ENCODE measurements at regions of chr7 and their contacts with region 1.

Region 1: GRCh38 chr7:23273141-23273599 is 26.0 kb upstream of the MALSU1 start:
- DNase-seq: peak; percentile 94
- H3K4me3 Mint-ChIP-seq: peak overlapping the region; percentile 46
- H3K27ac Mint-ChIP-seq: no peak overlapping the region
- H3K4me1 Mint-ChIP-seq: peaks cover 12% of the 10 kb centered on the region
- H3K27me3 Mint-ChIP-seq: peaks cover 13% of the 10 kb centered on the region

Region 2: DNA sequence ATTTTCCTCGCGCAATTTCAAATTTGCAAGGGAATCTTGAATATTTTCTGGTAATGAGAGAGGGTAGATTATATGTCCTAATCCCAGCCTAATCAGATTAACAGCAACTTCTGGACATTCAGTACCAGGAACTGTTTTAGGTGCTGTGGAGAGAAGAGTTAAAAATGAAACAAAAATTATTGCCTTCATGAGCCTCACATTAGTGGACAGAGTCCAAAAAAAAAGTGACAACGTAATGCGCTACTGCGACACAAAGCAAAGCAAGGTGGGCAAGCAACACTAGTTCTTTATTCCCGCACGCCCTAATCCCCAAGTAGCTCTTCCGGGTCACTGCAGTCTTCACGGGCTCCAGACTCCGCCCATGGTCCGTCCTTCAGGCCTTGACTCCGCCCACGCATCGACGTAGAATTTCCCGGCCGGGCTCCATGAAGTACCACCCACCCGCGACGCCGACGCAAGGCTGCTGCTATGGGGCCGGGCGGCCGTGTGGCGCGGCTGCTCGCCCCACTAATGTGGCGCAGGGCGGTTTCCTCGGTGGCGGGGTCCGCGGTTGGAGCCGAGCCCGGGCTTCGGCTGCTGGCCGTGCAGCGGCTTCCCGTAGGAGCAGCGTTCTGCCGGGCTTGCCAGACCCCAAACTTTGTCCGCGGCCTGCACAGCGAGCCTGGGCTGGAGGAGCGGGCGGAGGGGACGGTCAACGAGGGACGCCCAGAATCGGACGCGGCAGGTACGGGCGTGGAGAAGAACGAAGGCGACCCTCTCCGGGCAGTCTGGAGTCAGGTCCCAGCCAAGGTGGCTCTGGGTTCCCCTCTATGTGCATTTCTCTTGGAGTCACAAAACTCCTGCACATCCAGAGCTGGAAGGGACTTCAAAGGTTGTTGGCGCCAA is 26.0 kb after region 1 on chr7 and contains the start of gene MALSU1:
- CTCF ChIA-PET with region 1: interaction called, 13 read pairs
- DNase-seq: peak; percentile 98
- H3K4me3 Mint-ChIP-seq: peak within 1 kb of the TSS; percentile 95
- H3K27ac Mint-ChIP-seq: peak within 1 kb of the TSS; percentile 96
- H3K4me1 Mint-ChIP-seq: peaks cover 40% of the 10 kb centered on the region
- H3K27me3 Mint-ChIP-seq: no peaks in the 10 kb centered on the region

Region 3: DNA sequence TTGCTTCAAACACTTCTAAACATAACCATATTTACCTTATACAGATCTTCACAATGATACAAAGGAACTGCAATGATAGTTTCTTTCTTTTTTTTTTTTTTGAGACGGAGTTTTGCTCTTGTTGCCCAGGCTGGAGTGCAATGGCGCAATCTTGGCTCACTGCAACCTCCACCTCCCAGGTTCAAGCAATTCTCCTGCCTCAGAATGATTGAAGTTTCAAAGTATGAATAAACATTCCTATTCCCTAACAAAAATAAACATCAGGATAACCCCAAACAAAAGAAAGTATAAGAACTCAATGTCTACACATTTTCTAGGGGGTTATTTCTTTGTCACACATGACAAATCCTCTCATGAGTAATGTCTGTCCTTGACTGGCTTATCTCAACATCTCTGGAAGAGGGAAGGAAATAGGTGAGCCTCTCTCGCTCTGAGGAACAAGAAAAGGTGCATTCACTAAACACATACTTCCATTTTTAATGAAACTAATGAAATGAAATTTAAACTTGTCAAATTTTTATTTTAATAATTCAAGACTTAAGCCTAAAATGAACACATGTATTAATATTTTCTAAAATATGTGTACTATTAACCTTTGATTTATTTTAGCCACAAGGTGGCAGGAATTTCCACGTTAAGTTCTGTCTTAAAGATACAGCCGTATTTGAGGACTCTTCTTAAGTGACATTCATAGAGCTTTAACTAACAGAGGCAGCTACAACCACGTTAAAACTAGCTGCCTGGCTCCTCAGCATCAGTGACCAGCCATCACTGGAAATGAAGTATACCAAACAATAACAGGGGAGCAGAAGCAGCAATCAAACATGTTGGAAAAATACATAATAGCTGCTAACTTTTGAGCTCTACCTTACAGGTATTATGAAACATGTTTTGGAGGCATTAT is 84.3 kb after region 1 on chr7:
- CTCF ChIA-PET with region 1: interaction called, 11 read pairs
- DNase-seq: no peak
- H3K4me3 Mint-ChIP-seq: no peak overlapping the region
- H3K27ac Mint-ChIP-seq: no peak overlapping the region
- H3K4me1 Mint-ChIP-seq: peaks cover 22% of the 10 kb centered on the region
- H3K27me3 Mint-ChIP-seq: peaks cover 50% of the 10 kb centered on the region

Region 4: DNA sequence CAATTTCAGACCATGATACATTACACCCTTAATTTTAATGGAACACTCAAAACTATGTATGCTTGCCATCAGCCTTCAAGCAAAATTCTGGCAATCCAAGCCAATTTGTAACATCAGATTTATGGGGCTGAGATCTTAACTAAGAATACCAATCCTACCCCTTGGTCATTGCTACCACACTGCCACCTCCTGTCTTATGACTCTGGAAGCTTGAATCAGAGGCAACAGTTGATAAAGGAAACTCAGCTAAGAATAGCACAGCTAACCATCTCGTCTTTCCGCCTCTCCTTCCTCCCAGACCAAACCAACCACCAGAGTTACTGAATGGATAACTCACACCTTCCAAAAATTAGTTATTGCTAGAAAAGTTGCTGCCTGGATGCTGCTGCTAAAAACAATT is 189.7 kb after region 1 on chr7:
- CTCF ChIA-PET with region 1: interaction called, 48 read pairs
- DNase-seq: peak; percentile 25
- H3K4me3 Mint-ChIP-seq: no peak overlapping the region
- H3K27ac Mint-ChIP-seq: no peak overlapping the region
- H3K4me1 Mint-ChIP-seq: peaks cover 17% of the 10 kb centered on the region
- H3K27me3 Mint-ChIP-seq: peaks cover 66% of the 10 kb centered on the region

Region 5: GRCh38 chr7:23546897-23547572 is 273.9 kb after region 1 on chr7:
- CTCF ChIA-PET with region 1: interaction called, 44 read pairs
- DNase-seq: peak; percentile 84
- H3K4me3 Mint-ChIP-seq: no peak overlapping the region
- H3K27ac Mint-ChIP-seq: no peak overlapping the region
- H3K4me1 Mint-ChIP-seq: peaks cover 9% of the 10 kb centered on the region
- H3K27me3 Mint-ChIP-seq: peaks cover 8% of the 10 kb centered on the region

Measured in activated naive CD4-positive, alpha-beta T cell treated with anti-CD3 and anti-CD28 coated beads, Interleukin-2, amount 10 ng/mL, durations not matched to agents 7 days and 5 days (primary cell).